RWPE1 (cell line): ENCODE measurements at regions of chr19 and their contacts with region 1.

Region 1: DNA sequence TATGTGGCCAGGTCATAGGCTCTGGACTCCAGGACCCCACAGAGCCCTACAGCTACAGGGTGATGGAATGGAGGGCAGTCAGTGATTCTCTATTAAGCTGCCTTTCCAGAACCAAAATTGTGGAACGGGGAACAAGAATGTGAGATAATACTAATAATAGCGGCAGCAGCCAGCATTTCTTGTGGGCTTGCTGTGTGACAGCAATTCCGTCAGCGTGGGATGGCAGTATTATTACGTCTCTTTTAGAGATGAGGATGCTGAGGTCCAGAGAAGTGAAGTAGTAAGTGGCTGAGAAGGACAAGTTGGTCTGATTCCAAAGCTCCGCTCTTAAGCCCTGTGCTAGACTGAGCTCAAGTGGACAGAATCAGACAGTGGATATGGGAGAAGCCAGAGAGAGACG is 24.4 kb downstream of the GRIK5 start:
- DNase-seq: no peak
- H3K27ac ChIP-seq: no peak overlapping the region
- CTCF ChIP-seq: no peak

Region 2: DNA sequence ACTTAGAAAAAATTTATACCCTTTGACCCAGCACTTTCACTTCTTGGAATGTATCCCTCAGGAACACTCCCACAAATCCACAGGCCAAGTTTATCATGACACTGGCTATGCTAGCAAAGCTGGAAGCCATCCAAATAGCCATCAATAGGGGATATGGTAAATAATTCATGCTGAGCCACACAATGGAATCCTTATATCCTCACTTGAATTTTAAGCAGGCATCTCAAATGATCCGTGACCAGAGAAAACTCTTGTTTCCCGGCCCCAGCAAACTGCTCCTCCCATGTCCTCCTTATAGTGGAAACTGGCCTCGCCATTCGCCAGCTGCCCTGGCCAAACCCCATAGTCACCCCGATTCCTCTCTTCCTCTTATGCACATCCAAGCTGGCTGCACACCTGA is 13.1 kb before region 1 on chr19:
- CTCF ChIA-PET with region 1: interaction called, 10 read pairs
- POLR2A ChIA-PET with region 1: no interaction called
- DNase-seq: no peak
- H3K27ac ChIP-seq: no peak overlapping the region
- CTCF ChIP-seq: no peak